CD8-positive, alpha-beta T cell (primary cell): ENCODE measurements at regions of chr1 and their contacts with region 1.

Region 1: GRCh38 chr1:44775078-44775929 is at the start of gene RPS8:
- DNase-seq: peak; percentile 77 to 96 (median 90)
- ATAC-seq: peak; percentile 80
- H3K4me3 ChIP-seq: peak within 1 kb of the TSS; percentile 84 to 94
- H3K4me3 Mint-ChIP-seq: peak within 1 kb of the TSS; percentile 92
- H3K27ac ChIP-seq: peak within 1 kb of the TSS; percentile 92 to 95
- H3K27ac Mint-ChIP-seq: peak within 1 kb of the TSS; percentile 98
- H3K4me1 ChIP-seq: peaks cover 25% of the 10 kb centered on the region
- H3K4me1 Mint-ChIP-seq: peaks cover 39% of the 10 kb centered on the region
- H3K27me3 ChIP-seq: no peaks in the 10 kb centered on the region
- H3K27me3 Mint-ChIP-seq: no peaks in the 10 kb centered on the region
- CTCF ChIP-seq: no peak
- total RNA-seq, gene RPS8: 3,381 to 3,465 TPM

Region 2: DNA sequence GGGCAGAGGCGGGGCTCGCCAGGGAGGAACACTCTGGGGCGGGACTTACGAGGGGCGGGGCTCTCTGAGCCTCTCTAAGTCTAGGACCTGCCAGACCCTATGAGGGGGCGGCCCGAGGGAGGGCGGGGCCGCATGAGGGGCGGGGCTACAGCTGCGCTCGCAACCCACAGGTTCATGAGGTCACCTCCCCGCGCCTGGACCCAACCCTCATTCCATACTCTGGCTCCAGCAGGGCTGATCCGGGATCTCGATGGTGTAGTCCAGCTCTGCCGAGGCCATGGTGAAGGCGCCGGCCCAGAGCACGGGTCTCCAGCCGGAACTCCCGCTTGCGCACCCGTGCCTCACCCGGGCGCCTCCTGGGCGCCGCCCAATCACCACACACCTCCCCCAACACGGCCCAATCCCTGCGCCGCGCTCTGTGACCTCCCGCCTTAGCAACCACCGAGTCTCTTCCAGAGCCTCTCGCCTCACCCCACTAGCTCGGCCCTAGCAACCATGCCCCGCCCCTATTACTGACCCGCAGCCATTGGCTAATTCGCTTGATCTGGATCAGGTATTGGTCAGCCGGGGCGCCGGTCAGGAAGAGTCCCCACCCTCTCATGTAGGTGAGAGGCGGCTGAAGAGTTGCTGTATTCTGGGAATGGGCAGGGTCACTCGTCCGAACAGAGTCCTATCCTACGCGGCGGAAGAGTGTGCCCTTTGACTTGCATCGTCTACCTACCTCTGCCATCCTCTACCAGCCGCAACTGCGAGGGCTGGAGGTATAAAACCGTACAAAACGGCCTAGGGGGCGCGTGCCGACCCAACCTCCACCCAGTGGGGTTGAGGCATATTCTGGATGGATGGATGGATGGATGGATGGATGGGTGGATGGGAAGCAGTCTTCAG is 100.9 kb before region 1 on chr1 and contains the starts of genes ARMH1 and TMEM53:
- CTCF ChIA-PET with region 1: no interaction called
- POLR2A ChIA-PET with region 1: interaction called, 3 read pairs
- intact Hi-C with region 1: loop called in 1 of 2 experiments (anchors 1 kb)
- DNase-seq: peak; percentile 91 to 98 (median 96)
- ATAC-seq: peak; percentile 91
- H3K4me3 ChIP-seq: peak within 1 kb of the TSS; percentile 76 to 88
- H3K4me3 Mint-ChIP-seq: peak within 1 kb of the TSS; percentile 94
- H3K27ac ChIP-seq: peak within 1 kb of the TSS; percentile 81 to 82
- H3K27ac Mint-ChIP-seq: peak within 1 kb of the TSS; percentile 91
- H3K4me1 ChIP-seq: peaks cover 12% of the 10 kb centered on the region
- H3K4me1 Mint-ChIP-seq: peaks cover 25% of the 10 kb centered on the region
- H3K27me3 ChIP-seq: no peaks in the 10 kb centered on the region
- H3K27me3 Mint-ChIP-seq: no peaks in the 10 kb centered on the region
- CTCF ChIP-seq: no peak
- total RNA-seq, gene ARMH1: 117 to 128 TPM
- total RNA-seq, gene TMEM53: 1.2 TPM in 1 of 2 experiments, not detected in the other

Region 3: GRCh38 chr1:44721485-44722361 is 53.6 kb before region 1 on chr1:
- CTCF ChIA-PET with region 1: interaction called, 6 read pairs
- POLR2A ChIA-PET with region 1: interaction called, 28 read pairs
- intact Hi-C with region 1: no loop called
- DNase-seq: peak; percentile 36 to 92 (median 61)
- ATAC-seq: peak; percentile 84
- H3K4me3 ChIP-seq: peak overlapping the region in 1 of 2 experiments; percentile 11
- H3K4me3 Mint-ChIP-seq: peak overlapping the region; percentile 54
- H3K27ac ChIP-seq: peak overlapping the region; percentile 70 to 88
- H3K27ac Mint-ChIP-seq: peak overlapping the region; percentile 96
- H3K4me1 ChIP-seq: peaks cover 77% of the 10 kb centered on the region
- H3K4me1 Mint-ChIP-seq: peaks cover 73% of the 10 kb centered on the region
- H3K27me3 ChIP-seq: no peaks in the 10 kb centered on the region
- H3K27me3 Mint-ChIP-seq: no peaks in the 10 kb centered on the region
- CTCF ChIP-seq: no peak

Region 4: GRCh38 chr1:44786138-44786840 is 11.0 kb after region 1 on chr1:
- CTCF ChIA-PET with region 1: interaction called, 10 read pairs
- POLR2A ChIA-PET with region 1: interaction called, 39 read pairs
- intact Hi-C with region 1: loop called in 1 of 2 experiments (anchors 1 kb)
- DNase-seq: peak in 8 of 9 experiments; percentile 63 to 89 (median 78)
- ATAC-seq: peak; percentile 85
- H3K4me3 ChIP-seq: peak overlapping the region; percentile 56 to 94
- H3K4me3 Mint-ChIP-seq: peak overlapping the region; percentile 82
- H3K27ac ChIP-seq: peak overlapping the region; percentile 33 to 63
- H3K27ac Mint-ChIP-seq: peak overlapping the region; percentile 86
- H3K4me1 ChIP-seq: peaks cover 34% of the 10 kb centered on the region
- H3K4me1 Mint-ChIP-seq: peaks cover 29% of the 10 kb centered on the region
- H3K27me3 ChIP-seq: no peaks in the 10 kb centered on the region
- H3K27me3 Mint-ChIP-seq: no peaks in the 10 kb centered on the region
- CTCF ChIP-seq: peak; percentile 100

Region 5: DNA sequence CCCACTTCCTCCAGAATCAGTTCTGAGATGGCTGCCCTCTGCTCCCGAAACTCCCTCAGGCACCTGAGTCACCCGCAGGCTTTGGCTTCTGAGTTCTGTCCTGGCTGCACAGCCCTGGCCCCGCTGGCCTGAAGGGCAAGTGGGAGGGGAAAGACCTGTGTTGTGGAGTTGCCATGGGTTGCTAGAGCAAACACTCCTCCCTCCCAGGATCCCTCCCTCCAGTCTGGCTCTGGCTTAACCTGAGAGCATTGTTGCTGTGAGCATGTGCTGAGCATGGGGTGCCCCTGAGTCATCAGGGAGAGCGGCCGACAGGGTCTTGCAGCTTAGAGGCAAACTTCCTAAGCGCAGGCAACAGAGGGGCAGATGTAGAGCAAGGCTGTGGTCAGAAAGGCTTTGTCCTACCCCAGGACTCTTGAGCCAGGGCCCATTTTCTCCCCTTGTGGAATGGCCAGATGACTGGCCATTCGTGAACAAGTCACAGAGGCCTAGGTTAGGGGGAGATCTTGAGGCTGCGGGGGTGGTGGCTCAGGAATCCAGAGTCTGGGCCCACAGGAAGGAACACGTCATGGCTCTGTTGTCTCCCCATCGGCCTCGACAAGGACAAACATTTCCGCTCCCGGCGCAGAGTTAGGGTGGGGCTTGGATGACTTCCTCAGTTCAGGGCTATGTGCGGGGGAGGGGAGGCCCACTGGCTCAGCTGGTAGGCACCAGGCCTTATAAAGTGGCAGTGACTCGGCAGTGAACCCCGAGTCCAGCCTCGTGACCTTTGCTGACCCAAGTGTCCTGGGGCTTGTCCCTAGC is 32.2 kb after region 1 on chr1 and contains the start of gene DYNLT4:
- CTCF ChIA-PET with region 1: no interaction called
- POLR2A ChIA-PET with region 1: interaction called, 28 read pairs
- intact Hi-C with region 1: no loop called
- DNase-seq: peak; percentile 83 to 98 (median 93)
- ATAC-seq: peak; percentile 58
- H3K4me3 ChIP-seq: peak within 1 kb of the TSS in 1 of 2 experiments; percentile 35
- H3K4me3 Mint-ChIP-seq: peak within 1 kb of the TSS; percentile 60
- H3K27ac ChIP-seq: peak within 1 kb of the TSS; percentile 93 to 96
- H3K27ac Mint-ChIP-seq: peak within 1 kb of the TSS; percentile 99
- H3K4me1 ChIP-seq: peaks cover 70% of the 10 kb centered on the region
- H3K4me1 Mint-ChIP-seq: peaks cover 78% of the 10 kb centered on the region
- H3K27me3 ChIP-seq: no peaks in the 10 kb centered on the region
- H3K27me3 Mint-ChIP-seq: no peaks in the 10 kb centered on the region
- CTCF ChIP-seq: no peak
- total RNA-seq, gene DYNLT4: 2.2 to 2.5 TPM

Region 6: GRCh38 chr1:44819608-44820327 is 44.5 kb after region 1 on chr1:
- CTCF ChIA-PET with region 1: no interaction called
- POLR2A ChIA-PET with region 1: interaction called, 15 read pairs
- intact Hi-C with region 1: loop called in 1 of 2 experiments (anchors 1 kb)
- DNase-seq: peak; percentile 72 to 94 (median 80)
- ATAC-seq: peak; percentile 79
- H3K4me3 ChIP-seq: peak overlapping the region; percentile 86 to 87
- H3K4me3 Mint-ChIP-seq: peak overlapping the region; percentile 92
- H3K27ac ChIP-seq: peak overlapping the region; percentile 99 to 100
- H3K27ac Mint-ChIP-seq: peak overlapping the region; percentile 100
- H3K4me1 ChIP-seq: peaks cover 19% of the 10 kb centered on the region
- H3K4me1 Mint-ChIP-seq: peaks cover 35% of the 10 kb centered on the region
- H3K27me3 ChIP-seq: no peaks in the 10 kb centered on the region
- H3K27me3 Mint-ChIP-seq: no peaks in the 10 kb centered on the region
- CTCF ChIP-seq: no peak